ENCODE measurements at regions of chr1 and their contacts with region 1.

Region 1: GRCh38 chr1:10528066-10529014 is 53.6 kb downstream of the PEX14 start:
- DNase-seq: peak; percentile 85
- H3K27ac ChIP-seq: peak overlapping the region; percentile 81
- CTCF ChIP-seq: no peak

Region 2: GRCh38 chr1:10451287-10451686 is 77.1 kb before region 1 on chr1:
- CTCF ChIA-PET with region 1: no interaction called
- POLR2A ChIA-PET with region 1: interaction called, 10 read pairs
- DNase-seq: no peak
- H3K27ac ChIP-seq: no peak overlapping the region; the same call in 1 of the 2 replicates
- CTCF ChIP-seq: no peak

Region 3: DNA sequence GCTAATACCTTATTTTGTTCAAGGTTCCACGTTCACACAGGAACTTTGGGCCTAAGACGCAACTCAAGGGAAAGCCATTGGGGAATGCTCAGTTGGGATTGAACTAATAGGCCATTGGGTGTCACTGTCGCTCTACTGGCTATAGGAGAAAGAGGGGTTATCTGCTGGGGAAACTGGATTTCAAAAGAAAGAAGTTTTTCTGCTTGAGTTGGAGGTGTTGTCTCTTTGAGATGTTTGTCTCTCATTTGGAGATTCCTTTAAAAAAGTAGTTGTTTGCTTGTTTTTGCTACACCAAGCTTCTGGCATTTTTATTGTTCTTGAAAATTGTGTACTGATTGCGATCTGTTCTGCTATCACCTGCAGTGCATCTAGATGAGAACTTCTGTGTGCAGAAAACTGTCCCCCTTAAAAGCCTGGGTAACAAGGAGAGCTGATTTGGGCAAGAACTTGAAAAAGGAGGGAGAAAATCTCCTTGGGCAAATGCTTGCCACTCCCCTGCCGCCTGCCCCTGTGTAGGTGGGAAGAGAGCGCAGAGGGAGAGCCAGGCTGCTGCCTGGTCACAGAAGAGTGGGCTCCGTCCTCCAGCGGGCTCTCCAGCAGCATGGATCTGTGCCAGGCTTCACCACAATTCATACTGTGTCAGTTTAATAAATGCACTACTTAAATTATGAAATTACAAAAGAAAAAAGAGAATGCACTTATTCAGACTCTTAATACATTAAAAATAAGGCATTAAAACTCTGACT is 13.7 kb before region 1 on chr1:
- CTCF ChIA-PET with region 1: no interaction called
- POLR2A ChIA-PET with region 1: no interaction called
- DNase-seq: peak; percentile 36
- H3K27ac ChIP-seq: no peak overlapping the region
- CTCF ChIP-seq: peak; percentile 76